Calu3 (cell line): ENCODE measurements at regions of chrX and their contacts with region 1.

Region 1: DNA sequence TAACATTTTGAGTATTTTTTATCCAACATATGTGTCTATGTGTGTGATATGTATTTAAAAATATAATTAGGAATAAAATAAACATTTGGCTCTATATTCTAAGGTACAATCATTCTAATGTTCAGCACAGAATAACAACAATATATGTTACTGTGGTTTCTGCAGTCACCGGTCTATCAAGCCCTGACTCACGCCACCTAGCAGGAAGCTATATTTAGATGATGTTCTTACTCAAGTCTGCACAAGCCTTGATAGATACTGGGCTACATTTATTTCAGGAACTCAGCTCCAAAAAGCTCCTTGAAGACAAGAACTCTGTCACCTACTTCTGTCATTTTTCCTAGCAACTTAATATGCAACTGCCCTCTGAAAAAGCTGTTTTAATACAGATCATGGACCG is 152.0 kb upstream of the FTHL17 start:
- DNase-seq: no peak
- H3K4me3 Mint-ChIP-seq: no peak overlapping the region
- H3K27ac Mint-ChIP-seq: no peak overlapping the region
- H3K4me1 Mint-ChIP-seq: no peaks in the 10 kb centered on the region
- H3K27me3 Mint-ChIP-seq: no peaks in the 10 kb centered on the region
- CTCF ChIP-seq: no peak

Region 2: GRCh38 chrX:31012509-31013025 is 211.2 kb before region 1 on chrX:
- CTCF ChIA-PET with region 1: no interaction called
- intact Hi-C with region 1: no loop called
- DNase-seq: no peak
- H3K4me3 Mint-ChIP-seq: no peak overlapping the region
- H3K27ac Mint-ChIP-seq: no peak overlapping the region
- H3K4me1 Mint-ChIP-seq: no peaks in the 10 kb centered on the region
- H3K27me3 Mint-ChIP-seq: no peaks in the 10 kb centered on the region
- CTCF ChIP-seq: no peak

Region 3: GRCh38 chrX:31260351-31260750 is 36.5 kb after region 1 on chrX:
- CTCF ChIA-PET with region 1: no interaction called
- intact Hi-C with region 1: loop called (anchors 5 kb)
- DNase-seq: no peak
- H3K4me3 Mint-ChIP-seq: no peak overlapping the region
- H3K27ac Mint-ChIP-seq: no peak overlapping the region
- H3K4me1 Mint-ChIP-seq: peaks cover 5% of the 10 kb centered on the region
- H3K27me3 Mint-ChIP-seq: no peaks in the 10 kb centered on the region
- CTCF ChIP-seq: no peak

Region 4: DNA sequence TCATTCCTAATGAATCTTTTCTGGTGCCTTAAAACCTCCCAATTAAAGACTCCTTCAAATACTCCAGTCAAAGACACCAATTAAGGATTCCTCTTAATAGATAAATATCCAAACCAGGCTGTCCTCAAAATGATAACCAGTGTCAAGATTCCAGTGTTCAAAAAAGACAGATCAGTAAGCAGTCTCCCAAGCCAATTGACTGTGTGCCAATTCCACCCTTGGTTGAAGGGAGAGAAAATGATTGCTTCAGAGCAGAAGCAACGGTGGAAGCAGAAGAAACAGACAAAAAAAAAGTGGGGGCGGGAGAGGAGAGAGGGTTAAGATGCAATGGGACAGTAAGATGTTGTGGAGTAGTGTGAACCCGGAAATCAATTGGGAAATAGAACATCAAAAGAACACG is 64.0 kb after region 1 on chrX:
- CTCF ChIA-PET with region 1: no interaction called
- intact Hi-C with region 1: no loop called
- DNase-seq: no peak
- H3K4me3 Mint-ChIP-seq: no peak overlapping the region
- H3K27ac Mint-ChIP-seq: no peak overlapping the region
- H3K4me1 Mint-ChIP-seq: no peaks in the 10 kb centered on the region
- H3K27me3 Mint-ChIP-seq: no peaks in the 10 kb centered on the region
- CTCF ChIP-seq: no peak

Region 5: DNA sequence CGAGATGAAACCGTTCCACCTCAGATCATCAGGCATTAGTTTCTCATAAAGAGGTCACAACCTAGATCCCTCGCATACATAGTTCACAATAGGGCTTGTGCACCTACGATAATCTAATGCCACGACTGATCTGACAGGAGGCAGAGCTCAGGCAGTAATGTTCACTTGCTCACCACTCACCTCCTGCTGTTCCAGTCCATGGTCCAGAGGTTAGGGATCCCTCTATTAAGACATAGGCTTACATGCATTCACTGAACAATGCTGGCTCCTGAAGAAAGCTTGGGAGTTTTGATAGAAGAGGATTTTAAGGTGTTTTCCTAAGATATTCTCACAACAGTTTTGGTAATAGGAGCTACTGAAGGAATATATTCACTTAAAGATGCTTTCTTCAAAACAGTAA is 84.1 kb after region 1 on chrX:
- CTCF ChIA-PET with region 1: no interaction called
- intact Hi-C with region 1: no loop called
- DNase-seq: no peak
- H3K4me3 Mint-ChIP-seq: no peak overlapping the region
- H3K27ac Mint-ChIP-seq: no peak overlapping the region
- H3K4me1 Mint-ChIP-seq: no peaks in the 10 kb centered on the region
- H3K27me3 Mint-ChIP-seq: no peaks in the 10 kb centered on the region
- CTCF ChIP-seq: no peak

Region 6: DNA sequence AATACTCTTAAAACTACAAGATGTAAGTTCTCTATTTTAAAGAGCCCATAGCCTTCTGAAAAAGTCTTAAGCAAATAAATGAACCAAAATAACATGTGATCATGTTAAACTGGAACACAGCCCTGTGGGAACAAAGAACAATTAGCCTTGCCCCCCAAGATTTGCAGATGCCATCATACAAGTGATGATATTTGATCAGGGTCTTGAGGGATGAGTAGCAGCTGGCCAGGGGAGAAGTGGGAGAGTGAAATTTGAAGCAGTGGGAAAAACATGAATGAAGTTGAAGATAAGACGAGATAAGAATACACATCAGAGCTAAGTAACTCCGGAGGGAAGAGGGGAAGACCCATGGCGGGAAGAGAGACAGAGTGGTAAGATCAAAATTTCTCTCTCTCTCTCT is 298.1 kb after region 1 on chrX:
- CTCF ChIA-PET with region 1: no interaction called
- intact Hi-C with region 1: no loop called
- DNase-seq: no peak
- H3K4me3 Mint-ChIP-seq: no peak overlapping the region
- H3K27ac Mint-ChIP-seq: no peak overlapping the region
- H3K4me1 Mint-ChIP-seq: no peaks in the 10 kb centered on the region
- H3K27me3 Mint-ChIP-seq: no peaks in the 10 kb centered on the region
- CTCF ChIP-seq: no peak